ENCODE measurements at regions of chr12 and their contacts with region 1.

Region 1: GRCh38 chr12:55940065-55940732 is 9.2 kb downstream of the DGKA start:
- DNase-seq: peak; percentile 68 to 91 (median 87)
- ATAC-seq: peak; percentile 92
- H3K4me3 ChIP-seq: no peak overlapping the region
- H3K4me3 Mint-ChIP-seq: peak overlapping the region; percentile 52
- H3K27ac ChIP-seq: peak overlapping the region in 1 of 2 experiments; percentile 60
- H3K27ac Mint-ChIP-seq: peak overlapping the region; percentile 87
- H3K4me1 ChIP-seq: peaks cover 55% of the 10 kb centered on the region
- H3K4me1 Mint-ChIP-seq: peaks cover 84% of the 10 kb centered on the region
- H3K27me3 ChIP-seq: no peaks in the 10 kb centered on the region
- H3K27me3 Mint-ChIP-seq: no peaks in the 10 kb centered on the region
- CTCF ChIP-seq: peak; percentile 84

Region 2: GRCh38 chr12:55817346-55818139 is 122.7 kb before region 1 on chr12 and contains the starts of genes ORMDL2 and SARNP:
- CTCF ChIA-PET with region 1: interaction called, 25 read pairs
- POLR2A ChIA-PET with region 1: interaction called, 3 read pairs
- intact Hi-C with region 1: loop called in 1 of 2 experiments (anchors 1 kb)
- DNase-seq: peak; percentile 88 to 100 (median 94)
- ATAC-seq: peak; percentile 91
- H3K4me3 ChIP-seq: peak within 1 kb of the TSS; percentile 81 to 89
- H3K4me3 Mint-ChIP-seq: no peak within 1 kb of the TSS
- H3K27ac ChIP-seq: peak within 1 kb of the TSS; percentile 81 to 89
- H3K27ac Mint-ChIP-seq: no peak within 1 kb of the TSS
- H3K4me1 ChIP-seq: peaks cover 38% of the 10 kb centered on the region
- H3K4me1 Mint-ChIP-seq: peaks cover 44% of the 10 kb centered on the region
- H3K27me3 ChIP-seq: no peaks in the 10 kb centered on the region
- H3K27me3 Mint-ChIP-seq: no peaks in the 10 kb centered on the region
- CTCF ChIP-seq: no peak
- total RNA-seq, gene ORMDL2: 13.2 to 15.1 TPM
- total RNA-seq, gene SARNP: 48.0 to 50.3 TPM

Region 3: GRCh38 chr12:55874443-55874842 is 65.8 kb before region 1 on chr12:
- CTCF ChIA-PET with region 1: no interaction called
- POLR2A ChIA-PET with region 1: no interaction called
- intact Hi-C with region 1: no loop called
- DNase-seq: no peak
- ATAC-seq: no peak
- H3K4me3 ChIP-seq: no peak overlapping the region
- H3K4me3 Mint-ChIP-seq: no peak overlapping the region
- H3K27ac ChIP-seq: no peak overlapping the region
- H3K27ac Mint-ChIP-seq: no peak overlapping the region
- H3K4me1 ChIP-seq: no peaks in the 10 kb centered on the region
- H3K4me1 Mint-ChIP-seq: no peaks in the 10 kb centered on the region
- H3K27me3 ChIP-seq: no peaks in the 10 kb centered on the region
- H3K27me3 Mint-ChIP-seq: no peaks in the 10 kb centered on the region
- CTCF ChIP-seq: no peak

Measured in CD8-positive, alpha-beta T cell (primary cell).